MCF 10A (cell line): ENCODE measurements at regions of chr1 and their contacts with region 1.

Region 1: GRCh38 chr1:56709269-56709880 is 64.3 kb downstream of the PRKAA2 start:
- DNase-seq: peak; percentile 69
- H3K4me3 Mint-ChIP-seq: no peak overlapping the region
- H3K27ac Mint-ChIP-seq: no peak overlapping the region
- H3K4me1 Mint-ChIP-seq: peaks cover 6% of the 10 kb centered on the region
- H3K27me3 Mint-ChIP-seq: no peaks in the 10 kb centered on the region
- CTCF ChIP-seq: peak; percentile 66

Region 2: DNA sequence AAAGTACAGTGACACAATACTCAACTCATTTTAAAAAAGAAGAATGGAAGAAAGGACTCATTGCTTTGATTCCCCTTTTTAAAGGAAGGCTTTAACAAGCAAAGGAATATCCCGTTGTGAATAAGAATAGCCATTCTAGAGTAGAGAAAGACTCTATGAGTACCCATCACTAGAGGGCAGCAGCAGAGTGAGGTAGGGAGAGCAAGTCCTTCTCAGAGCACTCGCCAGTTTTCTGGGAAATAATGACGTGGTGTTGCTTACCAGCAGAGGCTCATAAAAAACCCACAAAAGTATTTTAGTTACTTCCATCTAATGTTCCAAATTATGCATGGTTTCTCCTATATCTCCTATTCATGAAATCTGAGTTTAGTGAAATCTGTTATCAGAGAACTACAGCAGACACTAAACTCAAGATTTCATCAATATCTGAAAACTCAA is 1568.8 kb before region 1 on chr1:
- CTCF ChIA-PET with region 1: no interaction called
- POLR2A ChIA-PET with region 1: no interaction called
- intact Hi-C with region 1: loop called (anchors 5 kb)
- DNase-seq: peak; percentile 86
- H3K4me3 Mint-ChIP-seq: no peak overlapping the region
- H3K27ac Mint-ChIP-seq: peak overlapping the region; percentile 46
- H3K4me1 Mint-ChIP-seq: peaks cover 5% of the 10 kb centered on the region
- H3K27me3 Mint-ChIP-seq: no peaks in the 10 kb centered on the region
- CTCF ChIP-seq: peak; percentile 66

Region 3: GRCh38 chr1:56578963-56579875 is 130.2 kb before region 1 on chr1 and contains the start of gene PLPP3:
- CTCF ChIA-PET with region 1: interaction called, 18 read pairs
- POLR2A ChIA-PET with region 1: interaction called, 3 read pairs
- intact Hi-C with region 1: loop called (anchors 2 kb)
- DNase-seq: peak; percentile 85
- H3K4me3 Mint-ChIP-seq: peak within 1 kb of the TSS; percentile 97
- H3K27ac Mint-ChIP-seq: peak within 1 kb of the TSS; percentile 33
- H3K4me1 Mint-ChIP-seq: no peaks in the 10 kb centered on the region
- H3K27me3 Mint-ChIP-seq: no peaks in the 10 kb centered on the region
- CTCF ChIP-seq: no peak
- total RNA-seq, gene PLPP3: 0.84 and 1.3 TPM in 2 replicates

Region 4: DNA sequence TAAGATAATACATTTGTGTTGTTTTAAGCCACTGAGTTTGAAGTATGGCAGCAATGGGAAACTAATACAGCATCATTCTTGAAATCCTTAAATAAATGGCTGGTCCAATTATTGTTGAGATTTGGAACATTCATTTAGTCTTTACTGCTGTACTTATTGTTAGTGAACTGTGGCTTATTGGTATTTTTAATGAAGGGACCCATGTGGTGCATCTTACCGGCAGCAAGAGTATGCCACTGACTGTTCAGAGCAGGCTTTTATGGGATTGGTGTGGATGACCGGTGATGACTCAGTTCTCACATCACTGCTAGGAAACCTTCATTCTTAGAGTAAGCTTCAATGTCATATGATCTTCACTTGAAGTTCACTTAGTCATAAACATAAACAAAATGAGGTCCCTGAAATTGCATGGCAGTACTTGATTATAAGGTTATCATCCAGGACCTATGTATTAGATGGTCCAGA is 32.8 kb before region 1 on chr1:
- CTCF ChIA-PET with region 1: interaction called, 11 read pairs
- POLR2A ChIA-PET with region 1: no interaction called
- intact Hi-C with region 1: no loop called
- DNase-seq: peak; percentile 64
- H3K4me3 Mint-ChIP-seq: no peak overlapping the region
- H3K27ac Mint-ChIP-seq: peak overlapping the region; percentile 53
- H3K4me1 Mint-ChIP-seq: no peaks in the 10 kb centered on the region
- H3K27me3 Mint-ChIP-seq: no peaks in the 10 kb centered on the region
- CTCF ChIP-seq: no peak

Region 5: GRCh38 chr1:56696663-56697062 is 12.7 kb before region 1 on chr1:
- CTCF ChIA-PET with region 1: interaction called, 14 read pairs
- POLR2A ChIA-PET with region 1: no interaction called
- intact Hi-C with region 1: no loop called
- DNase-seq: peak; percentile 11
- H3K4me3 Mint-ChIP-seq: no peak overlapping the region
- H3K27ac Mint-ChIP-seq: no peak overlapping the region
- H3K4me1 Mint-ChIP-seq: no peaks in the 10 kb centered on the region
- H3K27me3 Mint-ChIP-seq: no peaks in the 10 kb centered on the region
- CTCF ChIP-seq: no peak

Region 6: DNA sequence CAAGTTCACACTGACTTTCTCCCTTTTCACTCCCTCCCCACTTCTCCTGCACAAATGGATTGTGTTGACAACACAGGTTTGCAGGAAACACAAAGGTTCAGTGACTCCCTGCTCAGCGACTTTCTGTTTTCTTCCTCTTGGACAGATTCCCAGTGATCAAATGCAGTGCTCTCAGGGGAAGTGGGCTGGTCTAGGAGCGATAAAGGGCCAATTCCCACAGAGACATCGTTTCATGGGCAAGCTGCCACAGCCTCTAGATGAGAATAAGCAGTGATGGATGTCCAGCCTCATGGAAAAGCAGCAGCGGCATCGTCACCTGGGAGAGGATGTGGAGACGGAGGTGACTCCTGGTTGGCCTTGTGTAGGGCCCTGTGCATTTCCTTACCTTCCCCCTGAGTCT is 79.2 kb after region 1 on chr1:
- CTCF ChIA-PET with region 1: no interaction called
- POLR2A ChIA-PET with region 1: no interaction called
- intact Hi-C with region 1: no loop called
- DNase-seq: no peak
- H3K4me3 Mint-ChIP-seq: no peak overlapping the region
- H3K27ac Mint-ChIP-seq: no peak overlapping the region
- H3K4me1 Mint-ChIP-seq: no peaks in the 10 kb centered on the region
- H3K27me3 Mint-ChIP-seq: no peaks in the 10 kb centered on the region
- CTCF ChIP-seq: no peak